ENCODE measurements at regions of chr15 and their contacts with region 1.

Region 1: DNA sequence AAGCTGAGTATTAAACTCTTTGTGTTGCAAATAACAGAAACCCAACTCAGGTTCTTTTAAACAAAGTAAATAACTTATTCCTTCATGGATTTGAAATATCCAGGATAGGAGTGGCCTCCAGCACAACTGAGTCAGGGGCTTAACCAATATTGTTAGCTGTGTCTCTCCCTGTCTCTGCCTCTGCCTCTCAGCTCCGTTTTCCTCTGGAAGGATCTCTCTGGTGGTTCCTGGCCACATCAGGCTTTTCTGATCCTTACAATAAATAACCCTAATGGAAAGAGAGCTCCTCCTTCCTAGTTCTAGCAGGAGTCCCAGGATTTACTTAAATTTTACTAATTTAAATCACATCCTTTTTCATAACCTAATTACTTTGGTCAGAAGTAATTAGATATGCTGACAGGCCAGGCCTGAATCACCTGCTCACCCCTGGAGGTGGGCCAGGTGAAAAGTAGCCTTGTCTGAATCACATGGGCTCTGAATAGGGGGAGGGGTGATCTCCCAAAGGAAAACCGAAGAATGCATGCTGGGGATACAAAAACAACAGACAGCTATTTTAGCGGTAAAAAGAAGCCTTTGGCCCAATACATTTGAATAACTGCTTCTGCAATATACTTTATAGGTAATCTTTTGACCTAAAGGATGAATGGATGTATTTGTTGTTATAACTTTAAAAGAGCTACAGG is 75.4 kb downstream of the REC114 start:
- DNase-seq: no peak
- ATAC-seq: peak in 1 of 2 donors; percentile 60

Region 2: GRCh38 chr15:73370151-73370550 is 148.2 kb before region 1 on chr15:
- intact Hi-C with region 1: loop called in 1 of 2 experiments (anchors 5 kb)
- DNase-seq: no peak
- ATAC-seq: no peak

Region 3: DNA sequence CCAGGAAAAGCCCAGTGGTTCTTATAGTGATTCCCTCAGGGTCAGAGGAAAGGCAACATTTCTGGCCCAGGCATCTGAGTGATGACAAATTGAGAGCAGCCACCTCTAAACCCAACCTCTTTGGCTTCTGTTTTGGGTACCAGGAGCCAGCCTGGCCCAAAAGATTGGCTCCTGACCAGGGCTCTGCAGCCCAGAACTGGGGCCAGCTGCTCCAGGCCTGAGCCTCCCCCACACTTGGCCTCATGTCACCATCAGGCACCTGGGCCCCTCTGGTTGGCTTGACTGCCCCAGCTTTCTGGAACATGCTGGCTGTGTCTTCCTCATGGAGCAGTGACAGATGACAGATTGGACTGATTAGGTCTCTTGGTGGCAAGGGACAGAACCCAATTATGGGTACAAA is 123.5 kb before region 1 on chr15:
- intact Hi-C with region 1: loop called in 1 of 2 experiments (anchors 10 kb)
- DNase-seq: peak; percentile 61
- ATAC-seq: peak; percentile 87 to 95

Region 4: DNA sequence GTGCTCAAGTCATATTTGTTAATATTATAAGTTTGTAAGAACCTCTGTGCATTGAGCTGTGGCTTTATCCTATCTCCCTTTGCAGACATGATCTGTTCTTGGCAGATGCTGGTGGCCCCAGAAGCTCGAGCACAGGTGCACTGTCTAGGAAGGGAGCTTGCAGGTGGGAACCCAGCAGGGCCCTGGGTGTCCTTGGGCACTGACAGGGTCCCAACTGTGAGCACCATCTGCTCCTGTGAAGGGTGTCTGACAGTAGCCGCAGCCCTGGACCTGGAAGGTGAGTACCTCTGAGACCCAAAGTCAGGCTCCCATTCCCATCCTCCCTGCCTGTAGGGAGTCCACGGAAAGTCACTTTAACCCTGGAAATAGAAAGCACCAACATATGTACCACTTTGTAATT is 77.8 kb before region 1 on chr15:
- intact Hi-C with region 1: no loop called
- DNase-seq: no peak
- ATAC-seq: no peak

Measured in left cardiac atrium (tissue), 4 donors.